Calu3 (cell line): ENCODE measurements at regions of chr1 and their contacts with region 1.

Region 1: GRCh38 chr1:89762779-89763648 is 57.8 kb upstream of the LRRC8D start:
- DNase-seq: peak; percentile 85
- H3K4me3 Mint-ChIP-seq: peak overlapping the region; percentile 82
- H3K27ac Mint-ChIP-seq: peak overlapping the region; percentile 27
- H3K4me1 Mint-ChIP-seq: peaks cover 30% of the 10 kb centered on the region
- H3K27me3 Mint-ChIP-seq: peaks cover 46% of the 10 kb centered on the region
- CTCF ChIP-seq: peak; percentile 95

Region 2: GRCh38 chr1:88973520-88974137 is 789.4 kb before region 1 on chr1:
- CTCF ChIA-PET with region 1: no interaction called
- intact Hi-C with region 1: loop called (anchors 5 kb)
- DNase-seq: no peak
- H3K4me3 Mint-ChIP-seq: no peak overlapping the region
- H3K27ac Mint-ChIP-seq: no peak overlapping the region
- H3K4me1 Mint-ChIP-seq: peaks cover 9% of the 10 kb centered on the region
- H3K27me3 Mint-ChIP-seq: no peaks in the 10 kb centered on the region
- CTCF ChIP-seq: peak; percentile 63

Region 3: GRCh38 chr1:89483010-89483756 is 279.8 kb before region 1 on chr1:
- CTCF ChIA-PET with region 1: interaction called, 27 read pairs
- intact Hi-C with region 1: loop called (anchors 1 kb)
- DNase-seq: peak; percentile 71
- H3K4me3 Mint-ChIP-seq: no peak overlapping the region
- H3K27ac Mint-ChIP-seq: no peak overlapping the region
- H3K4me1 Mint-ChIP-seq: no peaks in the 10 kb centered on the region
- H3K27me3 Mint-ChIP-seq: no peaks in the 10 kb centered on the region
- CTCF ChIP-seq: no peak

Region 4: GRCh38 chr1:89524369-89525168 is 238.4 kb before region 1 on chr1 and contains the start of gene LRRC8B:
- CTCF ChIA-PET with region 1: interaction called, 3 read pairs
- intact Hi-C with region 1: loop called (anchors 2 kb)
- DNase-seq: peak; percentile 93
- H3K4me3 Mint-ChIP-seq: no peak within 1 kb of the TSS
- H3K27ac Mint-ChIP-seq: peak within 1 kb of the TSS; percentile 89
- H3K4me1 Mint-ChIP-seq: peaks cover 15% of the 10 kb centered on the region
- H3K27me3 Mint-ChIP-seq: no peaks in the 10 kb centered on the region
- CTCF ChIP-seq: no peak
- total RNA-seq, gene LRRC8B: 42.5 and 42.9 TPM in 2 replicates

Region 5: GRCh38 chr1:89598450-89599331 is 164.3 kb before region 1 on chr1:
- CTCF ChIA-PET with region 1: interaction called, 5 read pairs
- intact Hi-C with region 1: loop called (anchors 5 kb)
- DNase-seq: peak; percentile 36
- H3K4me3 Mint-ChIP-seq: no peak overlapping the region
- H3K27ac Mint-ChIP-seq: peak overlapping the region; percentile 56
- H3K4me1 Mint-ChIP-seq: peaks cover 14% of the 10 kb centered on the region
- H3K27me3 Mint-ChIP-seq: no peaks in the 10 kb centered on the region
- CTCF ChIP-seq: peak; percentile 60

Region 6: GRCh38 chr1:89632657-89633247 is 130.3 kb before region 1 on chr1 and contains the start of gene LRRC8C:
- CTCF ChIA-PET with region 1: interaction called, 4 read pairs
- intact Hi-C with region 1: loop called (anchors 1 kb)
- DNase-seq: peak; percentile 88
- H3K4me3 Mint-ChIP-seq: peak within 1 kb of the TSS; percentile 89
- H3K27ac Mint-ChIP-seq: peak within 1 kb of the TSS; percentile 75
- H3K4me1 Mint-ChIP-seq: peaks cover 11% of the 10 kb centered on the region
- H3K27me3 Mint-ChIP-seq: no peaks in the 10 kb centered on the region
- CTCF ChIP-seq: peak; percentile 39
- total RNA-seq, gene LRRC8C: 2.7 and 3.5 TPM in 2 replicates